Activated CD4-positive, alpha-beta T cell treated with anti-CD3 and anti-CD28 coated beads for 36 hours (primary cell): ENCODE measurements at regions of chr5 and their contacts with region 1.

Region 1: GRCh38 chr5:56126487-56127179 is 106.5 kb downstream of the ANKRD55 start:
- DNase-seq: peak; percentile 66
- ATAC-seq: peak; percentile 70
- H3K4me3 Mint-ChIP-seq: peak overlapping the region; percentile 63
- H3K27ac Mint-ChIP-seq: peak overlapping the region; percentile 95
- H3K4me1 Mint-ChIP-seq: peaks cover 57% of the 10 kb centered on the region
- H3K27me3 Mint-ChIP-seq: no peaks in the 10 kb centered on the region

Region 2: GRCh38 chr5:55936100-55936693 is 190.4 kb before region 1 on chr5:
- CTCF ChIA-PET with region 1: no interaction called
- POLR2A ChIA-PET with region 1: no interaction called
- intact Hi-C with region 1: no loop called
- DNase-seq: peak; percentile 91
- ATAC-seq: peak; percentile 81
- H3K4me3 Mint-ChIP-seq: no peak overlapping the region
- H3K27ac Mint-ChIP-seq: no peak overlapping the region
- H3K4me1 Mint-ChIP-seq: peaks cover 16% of the 10 kb centered on the region
- H3K27me3 Mint-ChIP-seq: no peaks in the 10 kb centered on the region

Region 3: DNA sequence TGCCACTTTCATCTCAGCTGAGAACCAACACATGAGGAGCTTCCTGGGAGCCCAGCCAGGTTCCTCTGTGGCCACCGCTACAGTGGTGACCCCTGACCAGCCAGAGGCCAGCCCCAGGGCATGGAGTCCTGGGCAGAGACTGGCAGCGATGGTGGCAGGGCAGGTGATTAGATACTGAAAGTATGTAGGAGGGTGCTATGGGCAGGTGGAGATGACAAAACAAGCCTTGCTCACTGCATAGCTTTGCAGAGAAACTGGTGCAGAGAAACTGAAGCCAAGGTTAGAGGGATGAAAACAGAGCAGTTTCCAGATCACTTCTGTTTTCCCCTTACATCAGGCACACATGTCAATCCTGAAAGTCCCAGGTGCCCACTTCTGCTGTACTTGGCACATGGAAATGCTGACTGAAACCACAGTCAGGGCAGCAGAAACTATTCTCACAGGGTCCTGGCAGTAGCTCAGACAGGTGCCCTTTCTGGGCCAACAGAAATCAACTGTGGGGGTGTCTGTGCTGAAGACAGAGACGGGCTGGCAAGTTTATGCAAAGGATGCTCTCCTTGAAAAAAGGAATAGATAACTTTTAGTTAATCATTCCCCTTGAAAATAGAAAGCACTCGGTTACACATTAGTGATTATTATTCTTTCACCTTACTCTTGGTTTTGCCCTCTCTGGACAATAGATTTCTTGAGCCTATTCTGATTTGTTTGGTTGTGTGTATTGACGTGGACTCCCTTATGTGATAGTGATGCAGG is 16.2 kb after region 1 on chr5:
- CTCF ChIA-PET with region 1: interaction called, 14 read pairs
- POLR2A ChIA-PET with region 1: no interaction called
- intact Hi-C with region 1: loop called in 1 of 2 experiments (anchors 2 kb)
- DNase-seq: peak; percentile 50
- ATAC-seq: peak; percentile 84
- H3K4me3 Mint-ChIP-seq: peak overlapping the region; percentile 11
- H3K27ac Mint-ChIP-seq: peak overlapping the region; percentile 75
- H3K4me1 Mint-ChIP-seq: peaks cover 70% of the 10 kb centered on the region
- H3K27me3 Mint-ChIP-seq: no peaks in the 10 kb centered on the region

Region 4: GRCh38 chr5:56286015-56286884 is 159.6 kb after region 1 on chr5:
- CTCF ChIA-PET with region 1: no interaction called
- POLR2A ChIA-PET with region 1: no interaction called
- intact Hi-C with region 1: no loop called
- DNase-seq: no peak
- ATAC-seq: no peak
- H3K4me3 Mint-ChIP-seq: no peak overlapping the region
- H3K27ac Mint-ChIP-seq: no peak overlapping the region
- H3K4me1 Mint-ChIP-seq: peaks cover 9% of the 10 kb centered on the region
- H3K27me3 Mint-ChIP-seq: no peaks in the 10 kb centered on the region

Region 5: DNA sequence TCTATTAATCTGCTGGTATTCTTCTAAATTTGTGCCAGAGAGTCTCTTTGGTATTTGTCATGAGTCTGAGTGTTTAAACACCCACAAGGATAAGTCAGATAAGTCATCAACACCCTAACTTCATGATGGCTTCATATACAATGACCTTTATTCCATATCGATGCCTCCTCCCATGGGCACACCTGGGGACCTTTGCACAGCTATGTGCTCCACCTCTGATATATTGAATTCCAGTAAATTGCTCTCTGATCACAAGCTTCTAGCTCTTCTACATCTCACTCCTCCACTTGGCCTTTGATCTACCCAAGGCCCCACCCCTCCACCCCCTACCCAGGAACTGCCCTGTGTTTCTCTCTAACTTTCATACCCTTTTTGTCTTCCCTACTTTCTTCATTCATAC is 928.0 kb after region 1 on chr5:
- CTCF ChIA-PET with region 1: no interaction called
- POLR2A ChIA-PET with region 1: no interaction called
- intact Hi-C with region 1: no loop called
- DNase-seq: no peak
- ATAC-seq: no peak
- H3K4me3 Mint-ChIP-seq: no peak overlapping the region
- H3K27ac Mint-ChIP-seq: no peak overlapping the region
- H3K4me1 Mint-ChIP-seq: no peaks in the 10 kb centered on the region
- H3K27me3 Mint-ChIP-seq: peaks cover 2% of the 10 kb centered on the region